Activated naive CD8-positive, alpha-beta T cell treated with anti-CD3 and anti-CD28 coated beads, Interleukin-2, amount 10 ng/mL, durations not matched to agents 7 days and 5 days (primary cell): ENCODE measurements at regions of chr5 and their contacts with region 1.

Region 1: GRCh38 chr5:134648425-134649162 is at the start of gene SEC24A:
- DNase-seq: peak; percentile 92
- ATAC-seq: peak; percentile 90
- H3K4me3 Mint-ChIP-seq: peak within 1 kb of the TSS; percentile 99
- H3K27ac Mint-ChIP-seq: peak within 1 kb of the TSS; percentile 96
- H3K4me1 Mint-ChIP-seq: peaks cover 16% of the 10 kb centered on the region
- H3K27me3 Mint-ChIP-seq: no peaks in the 10 kb centered on the region
- total RNA-seq, gene SEC24A: 20.5 to 20.6 TPM

Region 2: GRCh38 chr5:134626369-134627014 is 22.1 kb before region 1 on chr5:
- POLR2A ChIA-PET with region 1: interaction called, 13 read pairs
- DNase-seq: no peak
- ATAC-seq: no peak
- H3K4me3 Mint-ChIP-seq: no peak overlapping the region
- H3K27ac Mint-ChIP-seq: no peak overlapping the region
- H3K4me1 Mint-ChIP-seq: peaks cover 18% of the 10 kb centered on the region
- H3K27me3 Mint-ChIP-seq: no peaks in the 10 kb centered on the region

Region 3: DNA sequence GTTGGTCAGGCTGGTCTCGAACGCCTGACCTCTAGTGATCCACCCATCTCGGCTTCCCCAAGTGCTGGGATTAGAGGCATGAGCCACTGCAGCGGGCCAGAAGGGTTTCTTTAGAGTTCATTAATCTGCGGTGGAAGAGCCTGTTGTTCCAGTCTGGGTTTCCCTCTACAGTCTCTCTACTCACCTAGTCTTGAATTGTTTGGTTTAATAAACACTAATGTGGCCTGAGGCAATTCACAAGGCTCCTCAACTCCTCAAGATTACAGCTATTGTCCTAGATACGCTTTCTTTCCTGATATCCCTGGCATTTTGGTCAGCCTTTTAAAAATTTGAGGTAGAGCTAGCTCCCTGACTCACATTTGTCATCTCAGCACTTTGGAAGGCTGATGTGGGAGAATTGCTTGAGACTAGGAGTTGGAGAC is 11.4 kb before region 1 on chr5:
- POLR2A ChIA-PET with region 1: interaction called, 13 read pairs
- DNase-seq: no peak
- ATAC-seq: no peak
- H3K4me3 Mint-ChIP-seq: no peak overlapping the region
- H3K27ac Mint-ChIP-seq: no peak overlapping the region
- H3K4me1 Mint-ChIP-seq: peaks cover 2% of the 10 kb centered on the region
- H3K27me3 Mint-ChIP-seq: no peaks in the 10 kb centered on the region

Region 4: GRCh38 chr5:134692722-134693121 is 44.1 kb after region 1 on chr5:
- POLR2A ChIA-PET with region 1: no interaction called
- DNase-seq: no peak
- ATAC-seq: no peak
- H3K4me3 Mint-ChIP-seq: no peak overlapping the region
- H3K27ac Mint-ChIP-seq: no peak overlapping the region
- H3K4me1 Mint-ChIP-seq: no peaks in the 10 kb centered on the region
- H3K27me3 Mint-ChIP-seq: no peaks in the 10 kb centered on the region